ENCODE measurements at regions of chr7 and their contacts with region 1.

Region 1: GRCh38 chr7:80087051-80087770 is 47.4 kb upstream of the GNAI1 start:
- DNase-seq: peak; percentile 27
- ATAC-seq: peak; percentile 80
- H3K4me3 ChIP-seq: peak overlapping the region; percentile 15 to 52
- H3K27ac ChIP-seq: peak overlapping the region; percentile 89
- H3K4me1 ChIP-seq: peaks cover 44 to 65% of the 10 kb centered on the region in 2 experiments; a peak in 3 of 4 replicates
- H3K27me3 ChIP-seq: no peaks in the 10 kb centered on the region
- CTCF ChIP-seq: no peak
- POLR2A ChIP-seq: no peak
- RAD21 ChIP-seq: no peak

Region 2: GRCh38 chr7:80070391-80070790 is 16.8 kb before region 1 on chr7:
- CTCF ChIA-PET with region 1: no interaction called
- POLR2A ChIA-PET with region 1: no interaction called
- RAD21 ChIA-PET with region 1: no interaction called
- intact Hi-C with region 1: no loop called
- DNase-seq: no peak
- ATAC-seq: no peak
- H3K4me3 ChIP-seq: no peak overlapping the region
- H3K27ac ChIP-seq: no peak overlapping the region
- H3K4me1 ChIP-seq: no peaks in the 10 kb centered on the region
- H3K27me3 ChIP-seq: no peaks in the 10 kb centered on the region
- CTCF ChIP-seq: no peak
- POLR2A ChIP-seq: no peak
- RAD21 ChIP-seq: no peak

Region 3: GRCh38 chr7:80277434-80278427 is 190.5 kb after region 1 on chr7:
- CTCF ChIA-PET with region 1: no interaction called
- POLR2A ChIA-PET with region 1: no interaction called
- RAD21 ChIA-PET with region 1: no interaction called
- intact Hi-C with region 1: loop called (anchors 5 kb)
- DNase-seq: peak; percentile 92
- ATAC-seq: peak; percentile 76
- H3K4me3 ChIP-seq: peak overlapping the region; percentile 8 to 45; a peak in 3 of 4 replicates
- H3K27ac ChIP-seq: peak overlapping the region; percentile 99
- H3K4me1 ChIP-seq: peaks cover 72 to 93% of the 10 kb centered on the region in 2 experiments
- H3K27me3 ChIP-seq: no peaks in the 10 kb centered on the region
- CTCF ChIP-seq: no peak
- POLR2A ChIP-seq: no peak
- RAD21 ChIP-seq: no peak; the same call in 1 of the 2 replicates

Region 4: GRCh38 chr7:80950550-80950967 is 863.3 kb after region 1 on chr7:
- CTCF ChIA-PET with region 1: no interaction called
- POLR2A ChIA-PET with region 1: no interaction called
- RAD21 ChIA-PET with region 1: no interaction called
- intact Hi-C with region 1: no loop called
- DNase-seq: no peak
- ATAC-seq: no peak
- H3K4me3 ChIP-seq: no peak overlapping the region
- H3K27ac ChIP-seq: no peak overlapping the region
- H3K4me1 ChIP-seq: no peaks in the 10 kb centered on the region
- H3K27me3 ChIP-seq: no peaks in the 10 kb centered on the region
- CTCF ChIP-seq: no peak
- POLR2A ChIP-seq: no peak
- RAD21 ChIP-seq: no peak